ENCODE measurements at regions of chr20 and their contacts with region 1.

Region 1: DNA sequence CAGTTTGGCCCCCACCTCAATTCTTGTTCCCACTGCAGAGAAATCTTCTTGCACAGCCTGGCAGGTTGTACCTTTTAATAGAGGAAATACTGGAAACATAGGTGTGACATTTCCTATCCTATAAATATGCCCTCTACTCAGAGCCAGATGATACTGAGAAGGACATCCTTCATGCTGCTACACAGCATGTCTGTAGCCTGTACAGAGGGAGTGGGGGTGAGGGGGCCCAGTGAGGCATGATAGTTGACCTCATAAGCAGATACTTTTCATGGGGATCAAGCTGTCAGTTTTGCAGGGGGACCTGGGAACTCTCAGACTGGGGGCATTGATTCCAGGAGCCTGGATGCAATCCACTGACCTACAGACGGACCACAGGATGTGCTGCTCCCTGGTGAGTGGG is 96.2 kb upstream of the TOP1 start:
- DNase-seq: no peak
- H3K4me3 ChIP-seq: no peak overlapping the region
- H3K27ac ChIP-seq: no peak overlapping the region
- H3K4me1 ChIP-seq: no peaks in the 10 kb centered on the region
- H3K27me3 ChIP-seq: peaks cover 42% of the 10 kb centered on the region
- CTCF ChIP-seq: no peak

Region 2: DNA sequence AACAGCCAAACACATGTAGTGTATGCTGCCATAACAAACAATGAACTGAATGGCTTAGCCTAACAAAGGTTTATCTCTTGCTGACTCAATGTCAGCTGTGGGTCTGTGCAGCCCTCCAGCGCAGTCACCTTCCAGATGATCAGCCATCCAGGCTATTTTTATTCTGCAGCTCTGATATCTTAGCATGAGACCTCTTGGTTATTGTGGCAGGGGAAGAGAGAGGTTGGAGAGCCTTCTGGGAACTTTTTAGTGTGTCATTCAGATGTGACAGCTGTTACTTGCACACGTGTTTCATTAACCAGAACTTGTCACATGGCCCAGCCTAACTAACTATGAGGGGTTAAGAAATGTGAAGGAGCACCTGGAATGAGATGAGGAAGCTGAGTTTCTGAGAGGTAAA is 1767.8 kb before region 1 on chr20:
- CTCF ChIA-PET with region 1: no interaction called
- POLR2A ChIA-PET with region 1: interaction called, 36 read pairs
- intact Hi-C with region 1: no loop called
- DNase-seq: no peak
- H3K4me3 ChIP-seq: no peak overlapping the region
- H3K27ac ChIP-seq: no peak overlapping the region
- H3K4me1 ChIP-seq: no peaks in the 10 kb centered on the region
- H3K27me3 ChIP-seq: peaks cover 13% of the 10 kb centered on the region
- CTCF ChIP-seq: no peak

Region 3: DNA sequence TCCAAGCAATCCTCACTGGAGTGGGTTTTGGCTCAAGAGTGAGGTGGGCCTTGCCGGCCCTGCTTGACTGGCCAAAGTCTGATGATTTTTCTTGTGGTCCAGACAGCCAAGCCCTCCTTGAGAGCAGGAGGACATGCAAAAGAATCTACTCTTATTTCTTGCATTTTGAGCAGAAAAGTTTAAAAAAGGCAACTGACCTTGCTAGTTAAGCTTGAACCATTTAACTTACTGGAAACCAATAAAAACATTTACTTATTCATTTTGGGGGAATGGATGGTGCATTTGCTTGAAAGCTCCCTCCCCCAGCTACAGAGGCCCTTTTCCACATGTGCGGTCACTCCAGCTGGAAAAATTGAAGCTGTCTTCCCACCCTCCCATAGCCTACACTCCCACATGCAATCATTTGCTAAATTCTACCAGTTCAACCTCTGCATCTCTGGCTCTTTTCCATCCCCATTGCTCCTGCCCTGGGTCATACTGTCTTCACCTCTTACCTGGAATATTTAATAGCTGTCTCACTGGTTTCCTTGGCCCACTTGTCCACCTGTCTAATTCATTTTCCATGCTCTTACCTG is 1442.4 kb before region 1 on chr20:
- CTCF ChIA-PET with region 1: no interaction called
- POLR2A ChIA-PET with region 1: no interaction called
- intact Hi-C with region 1: no loop called
- DNase-seq: no peak
- H3K4me3 ChIP-seq: no peak overlapping the region
- H3K27ac ChIP-seq: no peak overlapping the region
- H3K4me1 ChIP-seq: no peaks in the 10 kb centered on the region
- H3K27me3 ChIP-seq: peaks cover 11% of the 10 kb centered on the region; the same call in 1 of the 2 replicates
- CTCF ChIP-seq: no peak

Region 4: DNA sequence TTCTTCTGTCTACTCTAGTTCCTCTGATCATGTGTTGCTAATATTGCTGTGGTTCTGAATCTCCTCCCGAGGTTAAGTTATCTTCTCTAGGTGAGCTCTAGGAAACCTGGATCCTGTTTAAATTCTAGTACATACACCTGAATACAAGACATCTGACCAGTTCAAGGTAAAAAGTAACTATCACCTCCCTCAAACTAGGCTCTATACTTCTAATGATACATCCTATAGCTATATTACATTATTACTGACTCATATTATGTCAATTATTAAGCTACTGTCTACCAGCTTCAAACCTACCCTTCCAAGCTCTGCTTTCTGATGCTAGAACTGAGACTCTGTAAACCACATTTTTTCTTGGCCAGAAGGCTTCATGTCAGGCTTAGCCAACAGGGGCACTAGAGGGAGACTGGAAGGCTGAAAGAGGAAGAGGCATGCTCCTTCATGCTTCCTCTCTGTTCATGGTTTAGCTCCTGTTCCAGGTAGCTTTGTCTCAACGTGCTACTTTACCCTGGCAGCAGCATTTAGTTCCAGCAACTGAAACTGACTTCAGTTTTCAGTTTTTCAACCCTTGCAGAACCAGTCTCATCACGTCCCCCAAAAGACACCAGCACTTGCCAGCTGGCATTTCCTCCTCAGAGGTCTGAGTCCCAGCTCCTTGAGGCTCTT is 52.2 kb before region 1 on chr20:
- CTCF ChIA-PET with region 1: no interaction called
- POLR2A ChIA-PET with region 1: no interaction called
- intact Hi-C with region 1: no loop called
- DNase-seq: no peak
- H3K4me3 ChIP-seq: no peak overlapping the region
- H3K27ac ChIP-seq: no peak overlapping the region
- H3K4me1 ChIP-seq: no peaks in the 10 kb centered on the region
- H3K27me3 ChIP-seq: peaks cover 17% of the 10 kb centered on the region
- CTCF ChIP-seq: no peak

Region 5: GRCh38 chr20:41119546-41120235 is 187.3 kb after region 1 on chr20:
- CTCF ChIA-PET with region 1: no interaction called
- POLR2A ChIA-PET with region 1: no interaction called
- intact Hi-C with region 1: no loop called
- DNase-seq: no peak
- H3K4me3 ChIP-seq: no peak overlapping the region
- H3K27ac ChIP-seq: no peak overlapping the region
- H3K4me1 ChIP-seq: no peaks in the 10 kb centered on the region
- H3K27me3 ChIP-seq: no peaks in the 10 kb centered on the region
- CTCF ChIP-seq: no peak